ENCODE measurements at regions of chr6 and their contacts with region 1.

Region 1: DNA sequence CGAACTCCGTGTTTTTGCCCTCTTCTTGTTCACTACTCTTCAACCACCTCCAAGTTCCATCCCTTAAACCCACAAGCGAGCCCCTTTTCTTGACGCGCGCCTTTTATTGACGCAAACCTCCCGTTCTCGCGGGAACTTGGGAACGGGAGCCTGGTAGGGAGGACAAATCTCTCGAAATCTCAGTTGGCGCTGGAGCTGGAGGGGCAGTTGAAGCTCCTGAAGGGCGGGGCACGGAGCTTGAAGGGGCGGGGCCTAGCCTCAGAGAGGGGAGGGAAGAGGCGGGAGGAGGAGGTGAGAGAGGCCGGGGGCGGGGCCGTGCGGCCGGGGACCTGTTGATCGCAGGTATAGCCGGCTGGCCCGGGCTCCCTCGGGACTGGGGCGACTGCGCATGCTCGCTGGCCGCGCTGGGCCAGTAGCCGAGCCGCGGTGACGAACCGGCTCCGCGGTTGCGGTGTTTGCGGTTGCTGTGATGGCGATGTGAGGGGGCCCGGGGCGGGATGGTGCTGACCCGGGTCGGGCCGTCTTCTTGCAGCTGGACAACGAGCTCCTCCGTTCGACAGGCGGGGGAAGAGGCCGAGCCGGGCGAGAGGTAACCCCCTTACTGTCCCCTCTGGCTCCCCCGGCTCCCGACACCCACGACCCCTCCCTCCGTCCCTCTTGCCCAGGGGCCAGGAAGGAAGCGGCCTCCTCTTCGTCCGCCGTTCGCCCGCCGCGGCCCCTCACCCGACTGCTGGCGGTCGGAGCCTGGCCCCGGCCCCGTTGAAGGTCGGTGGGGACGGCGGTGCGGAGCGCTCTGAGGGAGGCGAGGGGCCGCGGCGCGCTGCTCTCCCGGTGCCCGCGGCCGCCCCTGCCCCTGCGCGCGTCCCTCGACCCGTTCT is at the start of gene FAM135A:
- DNase-seq: peak; percentile 98 to 99 (median 99)
- ATAC-seq: peak; percentile 93
- H3K4me3 ChIP-seq: peak within 1 kb of the TSS; percentile 83
- H3K27ac ChIP-seq: peak within 1 kb of the TSS; percentile 83
- H3K4me1 ChIP-seq: peaks cover 3 to 6% of the 10 kb centered on the region in 2 experiments; a peak in 2 of 5 replicates
- H3K27me3 ChIP-seq: no peaks in the 10 kb centered on the region
- CTCF ChIP-seq: no peak; a peak in 1 of 6 replicates
- EP300 ChIP-seq: no peak
- POLR2A ChIP-seq: peak; percentile 98
- RAD21 ChIP-seq: no peak
- polyA plus RNA-seq, gene FAM135A: 7.4 to 8.4 TPM

Region 2: GRCh38 chr6:70390067-70390466 is 23.3 kb before region 1 on chr6:
- CTCF ChIA-PET with region 1: no interaction called
- POLR2A ChIA-PET with region 1: interaction called, 23 read pairs
- in situ Hi-C with region 1: no loop called
- intact Hi-C with region 1: no loop called
- DNase-seq: peak in 1 of 4 experiments; percentile 38
- ATAC-seq: no peak
- H3K4me3 ChIP-seq: no peak overlapping the region
- H3K27ac ChIP-seq: peak overlapping the region; percentile 8; the same call in 2 of the 3 replicates
- H3K4me1 ChIP-seq: peaks cover 2 to 25% of the 10 kb centered on the region in 2 experiments; a peak in 2 of 5 replicates
- H3K27me3 ChIP-seq: no peaks in the 10 kb centered on the region
- CTCF ChIP-seq: no peak
- EP300 ChIP-seq: no peak
- POLR2A ChIP-seq: no peak
- RAD21 ChIP-seq: no peak

Measured in K562 (cell line).